Activated CD4-positive, alpha-beta memory T cell treated with anti-CD3 and anti-CD28 coated beads, Interleukin-2, amount 10 ng/mL, durations not matched to agents 7 days and 5 days (primary cell): ENCODE measurements at regions of chr2 and their contacts with region 1.

Region 1: DNA sequence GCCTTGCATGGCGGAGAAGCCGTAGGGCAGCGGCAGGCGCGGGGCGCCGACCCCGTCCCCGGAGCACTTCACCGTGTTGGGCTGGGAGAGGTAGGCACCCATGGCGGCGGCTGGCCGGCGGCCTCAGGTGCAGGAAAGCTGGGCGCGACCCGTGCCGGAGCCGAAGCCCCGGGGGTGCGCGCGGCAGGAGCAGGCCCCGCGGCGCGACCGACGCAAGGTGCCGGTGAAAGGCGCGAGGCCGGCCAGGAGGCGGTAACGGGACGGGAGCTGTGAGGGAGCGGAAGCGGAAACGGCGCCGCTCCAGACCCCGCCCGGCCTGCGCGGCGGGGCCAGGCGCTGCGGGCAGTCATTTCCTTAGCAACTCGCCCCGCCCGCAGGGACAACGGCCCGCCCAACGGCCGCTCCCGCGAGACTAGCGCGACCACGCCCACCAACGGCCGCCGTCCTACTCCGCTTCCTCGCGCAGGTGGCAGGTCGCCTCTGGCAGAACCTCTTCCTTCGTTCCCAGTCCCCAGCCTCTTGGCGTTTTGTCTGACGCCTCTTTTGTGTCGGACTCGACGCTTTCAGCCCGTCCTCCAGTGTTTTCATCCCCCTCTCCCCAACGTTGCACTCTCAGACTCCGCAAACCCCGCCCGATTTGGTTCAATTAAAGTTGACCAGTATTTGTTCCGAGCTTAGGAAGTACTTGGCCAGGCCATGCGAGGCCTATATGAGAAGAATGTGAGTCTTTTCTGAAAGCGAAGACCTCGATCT is at the start of gene PPM1G:
- DNase-seq: peak; percentile 97
- H3K4me3 Mint-ChIP-seq: peak within 1 kb of the TSS; percentile 82
- H3K27ac Mint-ChIP-seq: peak within 1 kb of the TSS; percentile 74
- H3K4me1 Mint-ChIP-seq: peaks cover 45% of the 10 kb centered on the region
- H3K27me3 Mint-ChIP-seq: peaks cover 4% of the 10 kb centered on the region
- total RNA-seq, gene PPM1G: 119 to 122 TPM

Region 2: GRCh38 chr2:27281855-27282559 is 127.5 kb before region 1 on chr2 and contains the start of gene TRIM54:
- CTCF ChIA-PET with region 1: no interaction called
- POLR2A ChIA-PET with region 1: no interaction called
- DNase-seq: no peak
- H3K4me3 Mint-ChIP-seq: no peak within 1 kb of the TSS
- H3K27ac Mint-ChIP-seq: no peak within 1 kb of the TSS
- H3K4me1 Mint-ChIP-seq: peaks cover 13% of the 10 kb centered on the region
- H3K27me3 Mint-ChIP-seq: peaks cover 54% of the 10 kb centered on the region
- total RNA-seq, gene TRIM54: 0.13 TPM in 1 of 2 experiments, not detected in the other

Region 3: GRCh38 chr2:27370026-27370815 is 39.3 kb before region 1 on chr2 and contains the starts of genes EIF2B4 and SNX17:
- CTCF ChIA-PET with region 1: interaction called, 6 read pairs
- POLR2A ChIA-PET with region 1: interaction called, 46 read pairs
- DNase-seq: peak; percentile 100
- H3K4me3 Mint-ChIP-seq: peak within 1 kb of the TSS; percentile 88
- H3K27ac Mint-ChIP-seq: peak within 1 kb of the TSS; percentile 93
- H3K4me1 Mint-ChIP-seq: peaks cover 45% of the 10 kb centered on the region
- H3K27me3 Mint-ChIP-seq: no peaks in the 10 kb centered on the region
- total RNA-seq, gene EIF2B4: 34.1 to 36.9 TPM
- total RNA-seq, gene SNX17: 116 to 123 TPM

Region 4: DNA sequence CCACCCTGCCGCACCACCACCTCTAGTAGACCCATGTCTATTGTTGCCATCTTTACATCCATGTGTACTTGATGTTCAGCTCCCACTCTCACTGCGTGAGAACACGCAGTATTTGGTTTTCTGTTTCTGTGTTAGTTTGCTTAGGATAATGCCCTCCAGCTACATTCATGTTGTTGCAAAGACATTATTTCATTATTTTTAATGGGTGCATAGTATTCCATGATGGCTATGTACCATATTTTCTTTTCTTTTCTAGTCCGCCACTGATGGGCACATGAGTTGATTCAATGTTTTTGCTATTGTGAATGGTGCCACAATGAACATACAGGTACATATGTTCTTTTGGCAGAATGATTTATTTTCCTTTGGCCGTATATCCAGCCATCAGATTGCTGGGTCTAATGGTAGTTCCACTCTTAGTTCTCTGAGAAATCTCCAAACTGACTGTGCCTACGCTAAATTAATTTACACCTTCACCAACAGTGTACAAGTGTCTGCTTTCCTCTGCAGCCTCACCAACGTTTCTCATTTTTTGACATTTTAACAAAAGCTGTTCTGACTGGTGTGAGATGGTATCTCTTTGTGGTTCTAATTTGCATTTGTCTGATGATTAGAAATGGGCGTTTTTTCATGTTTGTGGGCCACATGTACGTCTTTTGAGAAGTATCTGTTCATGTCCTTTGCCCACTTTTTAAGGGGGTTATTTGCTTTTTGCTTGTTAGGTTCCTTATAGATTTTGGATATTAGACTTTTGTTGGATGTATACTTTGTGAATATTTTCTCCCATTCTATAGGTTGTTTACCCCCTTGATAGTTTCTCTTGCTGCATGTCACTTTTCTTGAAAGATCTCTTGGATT is 18.4 kb before region 1 on chr2:
- CTCF ChIA-PET with region 1: interaction called, 7 read pairs
- POLR2A ChIA-PET with region 1: interaction called, 11 read pairs
- DNase-seq: no peak
- H3K4me3 Mint-ChIP-seq: peak overlapping the region; percentile 38
- H3K27ac Mint-ChIP-seq: peak overlapping the region; percentile 90
- H3K4me1 Mint-ChIP-seq: peaks cover 41% of the 10 kb centered on the region
- H3K27me3 Mint-ChIP-seq: no peaks in the 10 kb centered on the region

Region 5: GRCh38 chr2:27628767-27629709 is 219.5 kb after region 1 on chr2 and contains the starts of genes CCDC121 and GPN1:
- CTCF ChIA-PET with region 1: no interaction called
- POLR2A ChIA-PET with region 1: interaction called, 19 read pairs
- DNase-seq: peak; percentile 98
- H3K4me3 Mint-ChIP-seq: no peak within 1 kb of the TSS
- H3K27ac Mint-ChIP-seq: no peak within 1 kb of the TSS
- H3K4me1 Mint-ChIP-seq: peaks cover 16% of the 10 kb centered on the region
- H3K27me3 Mint-ChIP-seq: no peaks in the 10 kb centered on the region
- total RNA-seq, gene CCDC121: 0.78 to 0.90 TPM
- total RNA-seq, gene GPN1: 45.0 to 45.8 TPM